Motor neuron (in vitro differentiated cells): ENCODE measurements at regions of chr7 and their contacts with region 1.

Region 1: GRCh38 chr7:155763691-155764437 is 48.4 kb downstream of the SHH start:
- ATAC-seq: no peak
- H3K4me3 ChIP-seq: no peak overlapping the region
- H3K27ac ChIP-seq: no peak overlapping the region
- H3K4me1 ChIP-seq: no peaks in the 10 kb centered on the region

Region 2: DNA sequence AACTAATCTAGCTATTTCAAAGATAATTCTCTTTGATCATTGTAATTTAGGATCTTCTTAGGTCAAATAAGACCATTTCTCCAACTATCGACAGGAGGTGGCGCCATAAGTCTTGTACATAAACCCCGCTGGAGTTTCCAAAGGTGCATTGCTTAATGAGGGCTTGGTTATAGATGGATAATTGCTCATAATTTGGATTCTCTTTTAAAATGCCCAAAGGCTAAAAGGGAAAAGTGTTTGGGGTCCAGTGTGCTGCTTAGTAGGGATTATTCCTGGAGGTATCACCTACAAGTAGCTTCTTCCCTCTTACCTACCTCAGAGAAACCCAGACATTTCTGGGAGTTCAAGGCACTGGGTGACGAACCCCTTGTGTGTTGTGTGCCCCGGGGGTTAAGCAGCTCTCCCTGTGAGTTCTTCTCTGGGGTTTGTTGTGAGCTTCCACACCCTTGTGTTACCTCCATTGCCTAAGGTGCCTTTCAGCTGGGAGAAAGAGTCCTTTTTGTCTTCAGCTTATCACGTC is 836.2 kb before region 1 on chr7:
- in situ Hi-C with region 1: loop called in 1 of 9 experiments (anchors 25 kb)
- ATAC-seq: peak in 6 of 8 experiments; percentile 31 to 61 (median 47)
- H3K4me3 ChIP-seq: no peak overlapping the region
- H3K27ac ChIP-seq: no peak overlapping the region
- H3K4me1 ChIP-seq: no peaks in the 10 kb centered on the region

Region 3: DNA sequence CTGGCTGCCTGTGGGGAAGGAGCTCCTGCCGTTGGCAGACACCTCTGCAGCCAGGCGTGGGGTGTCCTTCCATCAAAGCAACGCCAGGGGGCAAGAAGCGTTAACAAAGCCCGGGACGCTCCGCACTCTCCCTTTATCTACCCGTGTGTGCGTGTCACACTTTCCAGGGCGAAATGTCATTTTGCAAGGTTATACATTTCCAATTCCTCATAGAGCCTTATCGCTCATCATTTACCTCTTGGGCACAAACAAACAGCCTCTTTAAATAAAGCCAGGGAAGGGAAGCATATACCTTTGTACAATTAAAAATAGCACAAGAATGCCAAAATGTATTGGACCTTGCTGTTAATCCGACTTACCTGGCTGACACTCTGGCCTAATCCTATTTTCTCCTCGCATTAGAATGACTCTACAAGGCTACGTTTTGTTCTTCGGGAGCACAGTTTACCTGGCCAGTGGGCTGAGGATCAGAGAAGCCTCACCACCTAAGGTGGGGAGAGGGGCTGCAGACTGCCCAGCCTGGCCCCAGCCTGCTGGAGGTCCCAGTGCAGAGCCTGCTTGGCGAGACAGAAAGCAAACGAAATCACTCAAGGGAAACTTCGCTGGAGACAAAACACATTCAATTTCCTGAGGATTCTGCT is 383.5 kb before region 1 on chr7:
- in situ Hi-C with region 1: loop called in 2 of 9 experiments (anchors 25 kb)
- ATAC-seq: peak; percentile 66 to 88 (median 84)
- H3K4me3 ChIP-seq: no peak overlapping the region
- H3K27ac ChIP-seq: no peak overlapping the region
- H3K4me1 ChIP-seq: peaks cover 3 to 18% of the 10 kb centered on the region in 2 donors

Region 4: GRCh38 chr7:155412537-155413253 is 351.2 kb before region 1 on chr7:
- in situ Hi-C with region 1: loop called in 1 of 9 experiments (anchors 25 kb)
- ATAC-seq: peak; percentile 26 to 95 (median 71)
- H3K4me3 ChIP-seq: no peak overlapping the region
- H3K27ac ChIP-seq: no peak overlapping the region
- H3K4me1 ChIP-seq: no peaks in the 10 kb centered on the region

Region 5: GRCh38 chr7:155598810-155599210 is 165.1 kb before region 1 on chr7:
- in situ Hi-C with region 1: loop called in 1 of 9 experiments (anchors 10 kb)
- ATAC-seq: peak; percentile 32 to 86 (median 76)
- H3K4me3 ChIP-seq: peak overlapping the region in 1 of 5 donors; percentile 3
- H3K27ac ChIP-seq: no peak overlapping the region
- H3K4me1 ChIP-seq: peaks cover 0 to 2% of the 10 kb centered on the region in 2 donors

Region 6: DNA sequence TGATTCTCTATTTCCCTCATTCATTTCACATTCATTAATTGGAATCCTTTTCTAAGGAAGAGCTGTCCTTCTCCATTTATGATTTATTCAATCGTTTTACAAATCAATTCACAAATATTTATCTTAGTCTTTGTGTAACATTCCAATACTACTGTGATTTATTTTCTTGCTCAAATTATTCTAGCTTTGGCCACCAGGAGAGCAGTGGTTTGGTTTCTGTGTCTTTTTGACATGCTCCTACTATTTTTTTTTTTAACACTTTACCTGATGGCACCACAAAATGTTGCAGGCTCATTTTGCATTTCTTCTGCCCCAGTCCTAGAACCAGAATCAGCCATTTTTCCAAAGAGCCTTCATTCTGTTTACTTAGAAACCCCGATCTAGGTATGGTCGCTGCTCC is 132.7 kb before region 1 on chr7:
- in situ Hi-C with region 1: no loop called
- ATAC-seq: no peak
- H3K4me3 ChIP-seq: no peak overlapping the region
- H3K27ac ChIP-seq: no peak overlapping the region
- H3K4me1 ChIP-seq: no peaks in the 10 kb centered on the region

Region 7: GRCh38 chr7:155913291-155913690 is 149.4 kb after region 1 on chr7:
- in situ Hi-C with region 1: no loop called
- ATAC-seq: no peak
- H3K4me3 ChIP-seq: no peak overlapping the region
- H3K27ac ChIP-seq: no peak overlapping the region
- H3K4me1 ChIP-seq: no peaks in the 10 kb centered on the region